Vagina (tissue), 2 donors: ENCODE measurements at regions of chr17 and their contacts with region 1.

Region 1: GRCh38 chr17:50269477-50270434 is 4.5 kb upstream of the TMEM92 start:
- DNase-seq: peak in 1 of 2 donors; percentile 86
- H3K4me3 ChIP-seq: peak overlapping the region in 1 of 2 donors; percentile 14
- H3K27ac ChIP-seq: peak overlapping the region; percentile 93
- H3K4me1 ChIP-seq: peaks cover 83% of the 10 kb centered on the region
- H3K27me3 ChIP-seq: no peaks in the 10 kb centered on the region
- CTCF ChIP-seq: peak; percentile 47 to 76 (median 67)
- POLR2A ChIP-seq: no peak

Region 2: DNA sequence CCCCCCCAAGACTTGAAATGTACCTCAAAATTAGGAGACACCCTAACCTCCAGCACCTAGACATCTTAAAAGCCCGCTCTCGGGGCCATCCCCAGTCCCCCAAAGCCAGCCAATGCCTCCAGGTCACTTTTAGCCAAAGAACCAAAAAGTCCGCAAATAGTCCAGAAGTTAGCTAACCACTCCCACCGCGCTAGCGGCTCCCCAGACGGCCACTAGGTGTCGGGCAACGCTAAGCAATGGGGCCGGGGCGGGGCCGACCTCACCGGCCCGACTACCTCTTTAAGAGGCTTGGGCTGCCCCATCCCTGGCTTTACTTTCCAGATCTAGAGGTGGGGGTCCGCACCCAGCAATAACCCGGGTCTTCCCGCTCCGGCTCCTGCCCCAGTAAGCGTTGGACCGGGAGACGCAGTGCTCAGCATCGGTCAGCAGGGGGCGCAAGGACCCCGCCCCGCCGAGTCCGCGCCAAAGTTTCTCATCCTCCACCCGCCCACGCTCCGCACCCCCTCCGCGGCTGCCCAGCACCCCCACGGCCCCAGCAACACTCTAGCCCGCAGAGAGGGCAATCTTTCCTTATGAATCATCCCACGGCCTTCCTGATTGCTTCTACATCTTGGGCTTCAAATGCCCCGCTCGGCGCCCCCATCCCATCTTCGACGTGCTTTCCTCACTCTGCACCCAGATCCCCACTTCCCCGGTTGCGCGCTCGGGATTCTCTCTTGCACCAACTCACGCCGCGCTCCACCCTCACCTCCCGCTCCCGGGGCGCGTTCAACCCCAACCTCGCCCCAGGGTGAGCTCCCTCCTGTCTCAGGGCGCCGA is 69.1 kb before region 1 on chr17:
- intact Hi-C with region 1: loop called (anchors 1 kb)
- DNase-seq: peak in 1 of 2 donors; percentile 97
- H3K4me3 ChIP-seq: peak overlapping the region; percentile 79 to 81
- H3K27ac ChIP-seq: peak overlapping the region; percentile 97
- H3K4me1 ChIP-seq: peaks cover 75% of the 10 kb centered on the region
- H3K27me3 ChIP-seq: no peaks in the 10 kb centered on the region
- CTCF ChIP-seq: peak; percentile 100
- POLR2A ChIP-seq: no peak

Region 3: DNA sequence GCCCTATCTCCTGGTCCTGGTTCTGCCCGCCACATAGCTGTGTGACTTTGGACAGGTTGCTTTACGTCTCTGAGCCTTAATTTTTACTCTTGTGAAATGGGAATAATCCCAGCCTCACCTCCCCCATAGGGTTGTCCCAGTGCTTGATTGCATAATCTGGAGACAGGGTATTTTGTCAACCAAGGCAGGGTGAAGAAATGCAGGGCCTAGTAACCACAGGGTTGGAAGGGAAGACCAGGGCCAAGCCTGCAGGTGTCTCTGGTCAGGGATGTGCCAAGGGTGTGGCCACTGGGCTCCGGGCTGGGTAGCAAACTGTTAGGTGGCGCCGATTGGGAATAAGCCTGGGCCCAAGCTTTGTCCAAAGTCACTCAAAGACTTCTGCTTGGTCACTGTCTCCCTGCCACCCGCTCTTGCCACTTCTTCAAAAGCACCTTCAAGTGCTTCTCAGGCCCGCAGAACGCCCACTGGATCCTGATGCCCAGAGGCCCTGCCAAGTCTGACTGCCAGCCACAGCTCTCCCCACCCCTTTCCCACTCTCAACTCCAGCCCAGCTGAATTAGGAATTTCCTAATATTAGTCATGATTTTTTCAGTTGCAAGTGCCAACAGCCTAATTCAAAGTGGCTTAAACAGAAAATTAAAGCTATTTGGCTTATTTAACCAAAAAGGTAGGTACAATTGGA is 47.8 kb before region 1 on chr17:
- intact Hi-C with region 1: loop called (anchors 5 kb)
- DNase-seq: peak in 1 of 2 donors; percentile 88
- H3K4me3 ChIP-seq: no peak overlapping the region
- H3K27ac ChIP-seq: peak overlapping the region; percentile 97
- H3K4me1 ChIP-seq: peaks cover 61% of the 10 kb centered on the region
- H3K27me3 ChIP-seq: no peaks in the 10 kb centered on the region
- CTCF ChIP-seq: no peak
- POLR2A ChIP-seq: no peak

Region 4: GRCh38 chr17:50318501-50319285 is 48.9 kb after region 1 on chr17:
- intact Hi-C with region 1: no loop called
- DNase-seq: no peak
- H3K4me3 ChIP-seq: peak overlapping the region in 1 of 2 donors; percentile 15
- H3K27ac ChIP-seq: peak overlapping the region; percentile 30
- H3K4me1 ChIP-seq: peaks cover 18% of the 10 kb centered on the region
- H3K27me3 ChIP-seq: no peaks in the 10 kb centered on the region
- CTCF ChIP-seq: no peak
- POLR2A ChIP-seq: no peak